ENCODE measurements at regions of chr3 and their contacts with region 1.

Region 1: GRCh38 chr3:188520466-188520865 is 366.5 kb downstream of the LPP start:
- DNase-seq: no peak
- H3K4me3 ChIP-seq: no peak overlapping the region
- H3K27ac ChIP-seq: no peak overlapping the region
- H3K4me1 ChIP-seq: no peaks in the 10 kb centered on the region
- H3K27me3 ChIP-seq: no peaks in the 10 kb centered on the region
- CTCF ChIP-seq: no peak
- EP300 ChIP-seq: no peak
- POLR2A ChIP-seq: no peak

Region 2: GRCh38 chr3:187788984-187789857 is 731.2 kb before region 1 on chr3:
- in situ Hi-C with region 1: no loop called
- intact Hi-C with region 1: loop called (anchors 2 kb)
- DNase-seq: no peak
- H3K4me3 ChIP-seq: no peak overlapping the region
- H3K27ac ChIP-seq: no peak overlapping the region
- H3K4me1 ChIP-seq: no peaks in the 10 kb centered on the region
- H3K27me3 ChIP-seq: no peaks in the 10 kb centered on the region
- CTCF ChIP-seq: no peak
- EP300 ChIP-seq: no peak
- POLR2A ChIP-seq: no peak

Region 3: DNA sequence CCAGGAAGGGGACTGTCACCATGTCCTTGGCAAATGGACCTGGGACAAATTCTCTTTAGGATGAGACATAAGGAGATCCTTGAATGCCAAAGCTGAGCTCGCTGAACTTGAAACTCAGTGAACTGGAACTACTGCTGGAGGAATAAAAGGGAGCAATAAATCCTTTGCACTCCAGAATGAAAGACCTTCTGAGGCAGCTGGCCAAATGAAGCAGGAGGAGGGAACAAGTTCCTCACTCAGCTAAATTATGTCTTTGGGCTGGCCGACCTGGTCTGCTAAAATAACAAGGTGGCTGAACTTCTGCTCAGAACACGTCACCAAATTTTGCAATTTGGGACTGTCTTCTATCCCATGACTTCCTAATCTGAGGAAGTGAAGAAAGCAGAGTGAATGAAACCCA is 51.8 kb before region 1 on chr3:
- in situ Hi-C with region 1: no loop called
- intact Hi-C with region 1: no loop called
- DNase-seq: peak; percentile 56
- H3K4me3 ChIP-seq: no peak overlapping the region
- H3K27ac ChIP-seq: peak overlapping the region; percentile 37 to 72 (median 66)
- H3K4me1 ChIP-seq: peaks cover 0 to 26% (median 14%) of the 10 kb centered on the region in 4 donors
- H3K27me3 ChIP-seq: no peaks in the 10 kb centered on the region
- CTCF ChIP-seq: no peak
- EP300 ChIP-seq: no peak
- POLR2A ChIP-seq: no peak

Measured in transverse colon (tissue), 4 donors.